Endothelial cell of umbilical vein (primary cell): ENCODE measurements at regions of chr17 and their contacts with region 1.

Region 1: GRCh38 chr17:1055751-1056645 is 59.1 kb downstream of the TIMM22 start:
- DNase-seq: peak; percentile 66
- H3K4me3 ChIP-seq: no peak overlapping the region
- H3K27ac ChIP-seq: no peak overlapping the region
- H3K4me1 ChIP-seq: no peaks in the 10 kb centered on the region
- H3K27me3 ChIP-seq: no peaks in the 10 kb centered on the region
- CTCF ChIP-seq: peak; percentile 58 to 81
- POLR2A ChIP-seq: no peak

Region 2: GRCh38 chr17:794876-795275 is 261.1 kb before region 1 on chr17:
- CTCF ChIA-PET with region 1: interaction called, 42 read pairs
- POLR2A ChIA-PET with region 1: no interaction called
- dilution Hi-C with region 1: no loop called
- intact Hi-C with region 1: no loop called
- DNase-seq: peak; percentile 85
- H3K4me3 ChIP-seq: peak overlapping the region in 2 of 3 experiments; percentile 12 to 24
- H3K27ac ChIP-seq: no peak overlapping the region
- H3K4me1 ChIP-seq: peaks cover 10% of the 10 kb centered on the region
- H3K27me3 ChIP-seq: no peaks in the 10 kb centered on the region
- CTCF ChIP-seq: peak; percentile 79 to 94
- POLR2A ChIP-seq: no peak

Region 3: DNA sequence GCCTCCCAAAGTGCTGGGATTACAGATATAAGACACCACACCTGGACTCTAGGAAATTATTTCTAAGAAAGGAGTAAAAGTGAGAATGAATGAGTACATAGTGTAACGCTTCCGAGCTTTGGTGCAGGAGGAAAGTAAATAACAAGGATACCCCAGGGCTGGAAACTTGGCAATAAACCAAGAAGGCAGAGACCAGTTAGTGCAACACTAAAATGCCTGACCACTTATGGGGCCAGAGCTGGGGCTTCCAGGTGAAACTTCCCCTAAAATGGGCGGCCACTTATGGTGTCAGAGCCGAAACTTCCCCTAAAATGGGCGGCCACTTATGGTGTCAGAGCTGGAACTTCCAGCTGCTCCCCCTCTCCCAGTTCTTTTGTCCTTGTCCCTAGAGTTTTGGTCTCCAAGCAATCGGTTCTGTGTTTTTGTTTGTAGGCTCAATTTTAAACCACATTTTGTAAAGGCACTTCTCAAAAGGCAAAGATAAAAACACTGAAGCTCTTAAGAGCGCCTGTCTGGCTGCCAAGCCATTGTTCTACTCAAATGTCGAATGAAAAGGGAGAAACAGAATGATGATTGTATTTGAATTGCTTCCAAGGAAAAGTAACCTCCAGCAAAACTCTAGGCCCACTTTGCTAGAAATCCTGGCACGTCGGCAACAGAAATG is 140.3 kb before region 1 on chr17:
- CTCF ChIA-PET with region 1: no interaction called
- POLR2A ChIA-PET with region 1: no interaction called
- dilution Hi-C with region 1: no loop called
- intact Hi-C with region 1: no loop called
- DNase-seq: peak; percentile 94
- H3K4me3 ChIP-seq: peak overlapping the region in 1 of 3 experiments; percentile 0
- H3K27ac ChIP-seq: peak overlapping the region; percentile 79
- H3K4me1 ChIP-seq: peaks cover 31% of the 10 kb centered on the region
- H3K27me3 ChIP-seq: no peaks in the 10 kb centered on the region
- CTCF ChIP-seq: no peak
- POLR2A ChIP-seq: no peak

Region 4: DNA sequence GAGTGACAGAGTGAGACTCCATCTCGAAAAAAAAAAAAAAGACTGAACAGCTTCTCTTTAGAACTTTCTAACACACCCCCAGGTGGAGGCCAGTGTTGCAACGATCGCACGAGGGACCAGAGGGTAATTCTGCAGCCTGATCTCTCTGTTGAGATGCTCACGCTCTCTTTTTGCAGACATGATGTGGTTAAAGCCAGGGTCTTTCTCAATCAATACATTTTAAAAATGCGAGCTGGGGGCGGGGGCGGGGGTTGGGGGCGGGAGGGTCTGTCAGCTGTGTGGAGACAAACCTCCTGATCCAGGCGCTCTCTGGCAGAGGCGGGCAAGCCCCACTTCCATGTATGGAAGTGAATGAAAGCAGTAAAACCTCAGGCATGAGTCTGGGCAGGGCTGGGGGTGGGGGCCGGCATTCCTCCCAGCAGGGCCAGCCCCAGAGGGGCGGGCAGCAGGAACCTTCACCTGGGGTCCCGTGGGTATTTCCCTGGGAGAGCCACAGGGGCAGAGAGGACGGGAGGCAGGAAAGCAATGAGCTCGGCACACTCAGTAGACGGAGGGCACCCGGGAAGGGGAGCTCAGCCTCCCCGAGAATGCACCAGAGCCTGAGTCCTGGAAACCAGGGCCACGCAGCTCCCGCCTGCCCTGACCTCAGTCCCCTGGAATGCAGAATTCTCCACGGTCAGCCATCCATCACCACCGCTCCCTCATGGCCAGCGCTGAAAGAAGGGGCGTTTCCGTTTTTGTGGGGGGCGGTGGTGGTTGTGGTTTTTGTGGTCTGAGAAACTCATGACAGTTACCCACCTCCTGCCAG is 104.5 kb before region 1 on chr17:
- CTCF ChIA-PET with region 1: no interaction called
- POLR2A ChIA-PET with region 1: no interaction called
- dilution Hi-C with region 1: no loop called
- intact Hi-C with region 1: no loop called
- DNase-seq: no peak
- H3K4me3 ChIP-seq: no peak overlapping the region
- H3K27ac ChIP-seq: no peak overlapping the region
- H3K4me1 ChIP-seq: peaks cover 5% of the 10 kb centered on the region
- H3K27me3 ChIP-seq: no peaks in the 10 kb centered on the region
- CTCF ChIP-seq: no peak
- POLR2A ChIP-seq: no peak

Region 5: GRCh38 chr17:1005361-1005946 is 50.5 kb before region 1 on chr17:
- CTCF ChIA-PET with region 1: interaction called, 265 read pairs
- POLR2A ChIA-PET with region 1: no interaction called
- dilution Hi-C with region 1: no loop called
- intact Hi-C with region 1: loop called (anchors 1 kb)
- DNase-seq: peak; percentile 93
- H3K4me3 ChIP-seq: no peak overlapping the region
- H3K27ac ChIP-seq: peak overlapping the region; percentile 75
- H3K4me1 ChIP-seq: peaks cover 62% of the 10 kb centered on the region
- H3K27me3 ChIP-seq: no peaks in the 10 kb centered on the region
- CTCF ChIP-seq: no peak
- POLR2A ChIP-seq: peak; percentile 51

Region 6: GRCh38 chr17:1108861-1109605 is 53.0 kb after region 1 on chr17:
- CTCF ChIA-PET with region 1: interaction called, 45 read pairs
- POLR2A ChIA-PET with region 1: no interaction called
- dilution Hi-C with region 1: no loop called
- intact Hi-C with region 1: loop called (anchors 2 kb)
- DNase-seq: peak; percentile 42
- H3K4me3 ChIP-seq: peak overlapping the region; percentile 64 to 75 (median 72)
- H3K27ac ChIP-seq: peak overlapping the region; percentile 49
- H3K4me1 ChIP-seq: peaks cover 35% of the 10 kb centered on the region
- H3K27me3 ChIP-seq: no peaks in the 10 kb centered on the region
- CTCF ChIP-seq: no peak
- POLR2A ChIP-seq: no peak

Region 7: DNA sequence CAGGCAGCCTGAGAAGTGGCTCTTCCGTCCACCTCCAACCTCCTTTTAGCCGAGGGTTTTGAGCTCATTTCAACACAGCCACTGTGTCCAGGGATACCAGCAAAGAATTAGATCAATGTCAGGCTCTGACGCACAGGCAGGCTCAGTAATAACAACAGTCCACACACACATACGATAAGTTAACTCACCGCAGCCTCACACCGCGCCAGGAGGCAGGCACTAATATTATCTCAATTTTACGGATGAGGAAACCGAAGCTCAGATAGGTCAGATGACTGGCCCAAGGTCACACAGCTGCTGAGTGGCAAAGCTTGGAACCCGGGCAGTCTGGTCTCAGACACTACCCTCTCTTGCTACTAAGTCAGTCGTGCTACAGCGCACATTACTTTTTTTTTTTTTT is 100.9 kb after region 1 on chr17:
- CTCF ChIA-PET with region 1: interaction called, 12 read pairs
- POLR2A ChIA-PET with region 1: no interaction called
- dilution Hi-C with region 1: no loop called
- intact Hi-C with region 1: no loop called
- DNase-seq: no peak
- H3K4me3 ChIP-seq: no peak overlapping the region
- H3K27ac ChIP-seq: no peak overlapping the region
- H3K4me1 ChIP-seq: no peaks in the 10 kb centered on the region
- H3K27me3 ChIP-seq: no peaks in the 10 kb centered on the region
- CTCF ChIP-seq: no peak
- POLR2A ChIP-seq: no peak

Region 8: GRCh38 chr17:1197781-1198490 is 141.9 kb after region 1 on chr17:
- CTCF ChIA-PET with region 1: interaction called, 14 read pairs
- POLR2A ChIA-PET with region 1: no interaction called
- dilution Hi-C with region 1: no loop called
- intact Hi-C with region 1: no loop called
- DNase-seq: no peak
- H3K4me3 ChIP-seq: no peak overlapping the region
- H3K27ac ChIP-seq: no peak overlapping the region
- H3K4me1 ChIP-seq: no peaks in the 10 kb centered on the region
- H3K27me3 ChIP-seq: no peaks in the 10 kb centered on the region
- CTCF ChIP-seq: no peak
- POLR2A ChIP-seq: no peak

Region 9: DNA sequence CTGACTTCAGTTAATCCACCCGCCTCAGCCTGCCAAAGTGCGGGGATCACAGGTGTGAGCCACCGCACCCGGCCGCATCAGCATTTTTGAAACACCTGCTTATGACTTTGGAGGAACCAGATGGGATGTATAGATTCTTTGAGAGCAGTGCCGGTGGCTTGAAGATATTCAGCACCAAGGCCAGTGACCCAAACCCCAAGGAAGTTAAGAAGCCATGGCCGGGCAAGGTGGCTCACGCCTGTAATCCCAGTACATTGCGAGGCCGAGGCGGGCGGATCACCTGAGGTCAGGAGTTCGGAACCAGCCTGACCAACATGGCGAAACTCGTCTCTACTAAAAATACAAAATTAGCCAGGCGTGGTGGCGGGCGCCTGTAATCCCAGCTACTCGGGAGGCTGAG is 267.3 kb after region 1 on chr17:
- CTCF ChIA-PET with region 1: no interaction called
- POLR2A ChIA-PET with region 1: no interaction called
- dilution Hi-C with region 1: no loop called
- intact Hi-C with region 1: no loop called
- DNase-seq: no peak
- H3K4me3 ChIP-seq: no peak overlapping the region
- H3K27ac ChIP-seq: no peak overlapping the region
- H3K4me1 ChIP-seq: no peaks in the 10 kb centered on the region
- H3K27me3 ChIP-seq: no peaks in the 10 kb centered on the region
- CTCF ChIP-seq: no peak
- POLR2A ChIP-seq: no peak